ENCODE measurements at regions of chr16 and their contacts with region 1.

Region 1: GRCh38 chr16:71230122-71230845 is at the start of gene HYDIN:
- DNase-seq: no peak
- H3K4me3 ChIP-seq: no peak within 1 kb of the TSS
- CTCF ChIP-seq: no peak
- POLR2A ChIP-seq: no peak
- total RNA-seq, gene HYDIN: 0.15 to 2.3 (median 1.5) TPM in 3 of 4 donors, not detected in the other

Region 2: GRCh38 chr16:71297341-71297634 is 67.0 kb after region 1 on chr16:
- intact Hi-C with region 1: loop called (anchors 2 kb)
- DNase-seq: no peak
- H3K4me3 ChIP-seq: no peak overlapping the region
- CTCF ChIP-seq: no peak
- POLR2A ChIP-seq: no peak